ENCODE measurements at regions of chr9 and their contacts with region 1.

Region 1: GRCh38 chr9:77149879-77150278 is 27.5 kb upstream of the VPS13A start:
- DNase-seq: no peak
- H3K4me3 Mint-ChIP-seq: no peak overlapping the region
- H3K27ac Mint-ChIP-seq: no peak overlapping the region
- H3K4me1 Mint-ChIP-seq: no peaks in the 10 kb centered on the region
- H3K27me3 Mint-ChIP-seq: peaks cover 14% of the 10 kb centered on the region

Region 2: DNA sequence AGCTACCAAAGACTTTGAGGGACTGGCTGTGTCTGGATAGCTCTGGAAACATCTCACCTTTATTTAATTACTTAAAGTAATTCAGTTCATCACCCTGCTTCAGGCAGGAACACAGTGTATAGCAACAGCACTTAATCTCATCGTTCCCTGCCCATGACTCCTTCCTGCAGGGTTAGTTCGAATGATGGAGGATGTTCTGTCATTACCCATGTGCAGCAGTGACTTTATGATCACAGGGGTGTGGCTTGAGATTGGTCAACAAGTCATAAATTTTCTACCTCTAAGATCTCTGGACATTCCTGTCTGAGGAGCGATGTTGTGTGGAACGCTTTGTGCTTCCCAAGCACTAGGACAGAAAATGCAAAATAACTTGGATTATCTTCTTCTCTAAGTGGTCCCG is 206.8 kb before region 1 on chr9:
- CTCF ChIA-PET with region 1: no interaction called
- POLR2A ChIA-PET with region 1: no interaction called
- intact Hi-C with region 1: no loop called
- DNase-seq: no peak
- H3K4me3 Mint-ChIP-seq: no peak overlapping the region
- H3K27ac Mint-ChIP-seq: no peak overlapping the region
- H3K4me1 Mint-ChIP-seq: no peaks in the 10 kb centered on the region
- H3K27me3 Mint-ChIP-seq: no peaks in the 10 kb centered on the region

Region 3: GRCh38 chr9:77020438-77021290 is 129.2 kb before region 1 on chr9:
- CTCF ChIA-PET with region 1: no interaction called
- POLR2A ChIA-PET with region 1: no interaction called
- intact Hi-C with region 1: loop called (anchors 5 kb)
- DNase-seq: no peak
- H3K4me3 Mint-ChIP-seq: peak overlapping the region; percentile 16
- H3K27ac Mint-ChIP-seq: no peak overlapping the region
- H3K4me1 Mint-ChIP-seq: peaks cover 33% of the 10 kb centered on the region
- H3K27me3 Mint-ChIP-seq: peaks cover 72% of the 10 kb centered on the region

Region 4: GRCh38 chr9:77177161-77177893 is 27.4 kb after region 1 on chr9 and contains the start of gene VPS13A:
- CTCF ChIA-PET with region 1: no interaction called
- POLR2A ChIA-PET with region 1: no interaction called
- intact Hi-C with region 1: no loop called
- DNase-seq: peak; percentile 97
- H3K4me3 Mint-ChIP-seq: peak within 1 kb of the TSS; percentile 86
- H3K27ac Mint-ChIP-seq: peak within 1 kb of the TSS; percentile 87
- H3K4me1 Mint-ChIP-seq: peaks cover 22% of the 10 kb centered on the region
- H3K27me3 Mint-ChIP-seq: no peaks in the 10 kb centered on the region
- total RNA-seq, gene VPS13A: 27.3 to 30.4 TPM

Region 5: GRCh38 chr9:77304543-77304942 is 154.7 kb after region 1 on chr9:
- CTCF ChIA-PET with region 1: no interaction called
- POLR2A ChIA-PET with region 1: no interaction called
- intact Hi-C with region 1: no loop called
- DNase-seq: no peak
- H3K4me3 Mint-ChIP-seq: no peak overlapping the region
- H3K27ac Mint-ChIP-seq: no peak overlapping the region
- H3K4me1 Mint-ChIP-seq: peaks cover 10% of the 10 kb centered on the region
- H3K27me3 Mint-ChIP-seq: no peaks in the 10 kb centered on the region

Measured in activated CD4-positive, alpha-beta memory T cell treated with anti-CD3 and anti-CD28 coated beads for 36 hours (primary cell).